A549 (cell line): ENCODE measurements at regions of chr1 and their contacts with region 1.

Region 1: DNA sequence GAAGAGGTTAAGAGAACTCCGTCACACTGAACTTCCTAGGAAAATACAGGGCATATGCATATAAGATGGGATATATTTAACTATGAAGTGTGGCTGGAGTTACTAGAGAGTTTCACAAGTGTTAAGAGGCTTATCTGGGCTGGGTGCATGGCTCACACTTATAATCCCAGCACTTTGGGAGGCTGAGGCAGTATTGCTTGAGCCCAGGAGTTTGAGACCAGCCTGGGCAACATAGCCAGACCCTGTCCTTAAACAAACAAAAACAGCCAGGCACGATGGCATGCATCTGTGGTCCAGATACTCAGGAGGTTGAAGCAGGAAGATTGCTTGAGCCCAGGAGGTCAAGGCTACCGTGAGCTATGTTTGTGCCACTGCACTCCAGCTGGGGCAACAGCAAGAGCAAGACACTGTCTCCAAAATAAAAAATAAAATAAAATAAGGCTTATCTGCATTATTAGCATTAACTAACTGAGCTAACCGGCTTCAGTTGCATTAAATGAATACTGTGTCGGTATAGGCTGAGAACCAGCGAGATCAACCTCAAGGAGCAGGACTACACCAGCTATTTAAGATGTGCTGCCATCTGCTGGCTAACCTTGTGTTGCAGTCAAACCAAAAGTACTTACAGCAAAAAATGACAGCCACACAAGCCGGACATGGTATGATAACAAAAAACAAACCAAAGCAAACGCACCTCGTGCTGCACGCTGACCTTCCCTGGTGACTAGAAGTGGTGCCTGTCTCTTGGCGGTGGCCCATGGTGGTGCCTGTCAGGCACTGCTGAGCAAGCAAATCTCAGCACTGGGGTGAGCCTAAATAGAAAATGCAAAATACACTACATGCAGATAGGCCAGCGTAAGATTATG is 19.7 kb upstream of the RBBP5 start:
- DNase-seq: peak; percentile 76 to 83
- ATAC-seq: peak; percentile 88 to 94
- H3K4me3 ChIP-seq: no peak overlapping the region
- H3K27ac ChIP-seq: peak overlapping the region in 1 of 2 experiments; percentile 63; a peak in 2 of 6 replicates
- H3K4me1 ChIP-seq: peaks cover 16% of the 10 kb centered on the region
- CTCF ChIP-seq: peak; percentile 82
- EP300 ChIP-seq: no peak
- POLR2A ChIP-seq: no peak
- RAD21 ChIP-seq: peak; percentile 52 to 59; a peak in 4 of 5 replicates

Region 2: DNA sequence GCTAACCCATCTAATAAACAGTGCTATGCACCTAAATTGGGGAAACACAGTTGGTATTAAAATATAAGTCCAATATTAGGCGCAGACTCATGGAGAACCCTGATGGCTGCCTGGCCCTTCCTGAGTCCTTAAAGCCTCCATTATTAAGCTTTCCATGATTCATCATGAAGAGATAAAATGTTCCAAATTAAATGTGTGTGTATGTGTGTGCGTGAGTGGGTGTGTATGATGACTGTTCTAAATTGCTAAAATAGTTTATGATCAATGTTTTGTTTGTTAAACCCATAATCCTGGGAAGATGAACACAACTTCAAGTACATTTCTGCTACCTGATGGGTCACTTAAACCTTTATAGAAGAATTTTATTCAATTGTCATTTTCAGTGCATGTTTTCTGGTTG is 13.4 kb before region 1 on chr1:
- CTCF ChIA-PET with region 1: interaction called, 56 read pairs
- POLR2A ChIA-PET with region 1: interaction called, 4 read pairs
- DNase-seq: no peak
- ATAC-seq: no peak
- H3K4me3 ChIP-seq: no peak overlapping the region
- H3K27ac ChIP-seq: no peak overlapping the region
- H3K4me1 ChIP-seq: 0 out of 3 replicates have a peak, but pooled peaks cover under 1% of the 10 kb centered on the region
- CTCF ChIP-seq: no peak
- EP300 ChIP-seq: no peak
- POLR2A ChIP-seq: no peak
- RAD21 ChIP-seq: no peak

Region 3: GRCh38 chr1:205162301-205162700 is 20.8 kb after region 1 on chr1:
- CTCF ChIA-PET with region 1: interaction called, 31 read pairs
- POLR2A ChIA-PET with region 1: no interaction called
- DNase-seq: no peak
- ATAC-seq: no peak
- H3K4me3 ChIP-seq: no peak overlapping the region
- H3K27ac ChIP-seq: no peak overlapping the region
- H3K4me1 ChIP-seq: no peaks in the 10 kb centered on the region
- CTCF ChIP-seq: no peak
- EP300 ChIP-seq: no peak
- POLR2A ChIP-seq: no peak
- RAD21 ChIP-seq: no peak

Region 4: DNA sequence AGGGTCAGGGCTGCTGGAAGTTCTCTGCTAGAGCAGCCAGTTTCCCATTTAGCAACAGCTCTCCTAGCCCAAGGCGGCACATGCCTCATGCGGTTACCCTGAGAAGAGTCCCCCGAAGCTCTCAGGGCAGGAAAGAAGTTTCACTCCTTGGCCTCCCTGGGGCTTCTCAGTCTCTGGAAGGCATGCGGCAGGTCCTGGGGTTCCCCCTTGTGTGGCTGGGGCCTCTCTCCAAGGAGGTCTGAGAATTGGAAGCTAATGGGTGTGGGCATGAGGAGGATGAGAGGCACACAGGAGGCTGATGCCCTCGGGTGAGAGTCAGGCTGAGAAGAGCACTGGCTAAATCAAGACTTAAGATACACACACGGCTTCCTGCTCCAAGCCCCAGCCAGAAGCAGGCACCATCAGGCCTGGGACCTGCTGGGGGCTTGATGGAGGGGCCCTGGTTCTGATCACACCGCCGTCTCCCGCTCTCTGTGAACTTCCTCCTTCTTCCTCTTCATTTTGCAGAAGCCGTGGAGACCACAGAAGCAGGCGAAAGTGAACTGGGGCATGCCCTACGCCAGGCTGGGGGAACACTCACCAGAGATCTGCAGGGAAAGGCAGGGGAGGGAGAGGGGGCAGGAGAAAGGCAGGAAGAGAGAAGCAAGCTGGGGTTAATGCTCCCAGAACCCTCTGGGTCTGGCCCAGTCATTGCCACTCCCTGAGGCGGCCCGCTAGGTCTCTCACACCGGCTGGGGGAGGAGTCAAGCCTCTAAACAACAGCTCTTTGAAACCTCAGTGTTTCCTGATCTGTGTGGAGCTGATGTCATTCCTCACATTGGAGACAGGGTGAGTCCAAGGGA is 299.2 kb after region 1 on chr1:
- CTCF ChIA-PET with region 1: no interaction called
- POLR2A ChIA-PET with region 1: no interaction called
- DNase-seq: peak in 1 of 2 experiments; percentile 53
- ATAC-seq: peak; percentile 31 to 50; a peak in 5 of 6 replicates
- H3K4me3 ChIP-seq: no peak overlapping the region
- H3K27ac ChIP-seq: peak overlapping the region in 1 of 2 experiments; percentile 24; a peak in 2 of 6 replicates
- H3K4me1 ChIP-seq: peaks cover 16% of the 10 kb centered on the region
- CTCF ChIP-seq: no peak
- EP300 ChIP-seq: no peak
- POLR2A ChIP-seq: no peak
- RAD21 ChIP-seq: no peak